ENCODE measurements at regions of chr10 and their contacts with region 1.

Region 1: GRCh38 chr10:87915989-87916388 is 52.6 kb downstream of the PTEN start:
- DNase-seq: no peak
- ATAC-seq: no peak
- H3K4me3 Mint-ChIP-seq: no peak overlapping the region
- H3K27ac Mint-ChIP-seq: peak overlapping the region; percentile 12
- H3K4me1 Mint-ChIP-seq: peaks cover 50% of the 10 kb centered on the region
- H3K27me3 Mint-ChIP-seq: no peaks in the 10 kb centered on the region
- CTCF ChIP-seq: no peak

Region 2: DNA sequence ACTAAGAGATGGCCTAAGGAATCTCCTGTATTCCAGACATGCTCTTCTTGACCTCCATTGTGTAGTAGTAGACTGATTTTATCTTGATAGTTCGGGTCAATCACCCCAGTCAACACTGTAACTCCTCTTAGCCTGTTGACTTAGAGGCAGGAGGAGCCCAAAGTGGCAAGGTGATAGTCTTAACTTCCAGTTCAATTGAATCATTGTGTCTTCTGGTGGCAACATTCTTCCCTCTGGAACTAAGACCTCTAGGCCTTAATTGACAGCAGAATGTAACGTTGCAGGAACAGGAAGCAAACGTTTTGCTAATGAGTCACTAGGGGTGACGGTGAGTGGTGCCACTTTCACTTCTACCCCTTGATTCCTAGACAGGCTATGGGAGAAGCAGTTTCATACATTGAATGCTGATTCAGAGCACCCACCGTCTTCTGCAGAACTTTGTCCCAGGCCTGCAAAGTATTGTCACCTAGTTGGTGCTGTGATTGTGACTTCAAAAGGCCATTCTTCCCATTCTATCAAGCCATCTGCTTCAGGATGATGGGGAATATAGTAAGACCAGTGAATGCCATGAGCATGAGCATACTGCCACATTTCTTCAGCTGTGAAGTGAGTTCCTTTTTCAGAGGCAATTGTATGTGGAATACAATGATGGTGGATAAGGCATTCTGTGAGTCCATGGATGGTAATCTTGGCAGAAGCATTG is 280.2 kb before region 1 on chr10:
- CTCF ChIA-PET with region 1: no interaction called
- POLR2A ChIA-PET with region 1: no interaction called
- intact Hi-C with region 1: no loop called
- DNase-seq: no peak
- ATAC-seq: peak; percentile 60
- H3K4me3 Mint-ChIP-seq: no peak overlapping the region
- H3K27ac Mint-ChIP-seq: no peak overlapping the region
- H3K4me1 Mint-ChIP-seq: peaks cover 7% of the 10 kb centered on the region
- H3K27me3 Mint-ChIP-seq: no peaks in the 10 kb centered on the region
- CTCF ChIP-seq: no peak

Region 3: GRCh38 chr10:87887548-87888289 is 28.3 kb before region 1 on chr10:
- CTCF ChIA-PET with region 1: no interaction called
- POLR2A ChIA-PET with region 1: no interaction called
- intact Hi-C with region 1: loop called (anchors 5 kb)
- DNase-seq: no peak
- ATAC-seq: peak; percentile 21
- H3K4me3 Mint-ChIP-seq: no peak overlapping the region
- H3K27ac Mint-ChIP-seq: no peak overlapping the region
- H3K4me1 Mint-ChIP-seq: peaks cover 40% of the 10 kb centered on the region
- H3K27me3 Mint-ChIP-seq: no peaks in the 10 kb centered on the region
- CTCF ChIP-seq: no peak

Region 4: GRCh38 chr10:87896216-87896615 is 19.8 kb before region 1 on chr10:
- CTCF ChIA-PET with region 1: no interaction called
- POLR2A ChIA-PET with region 1: no interaction called
- intact Hi-C with region 1: loop called (anchors 2 kb)
- DNase-seq: no peak
- ATAC-seq: no peak
- H3K4me3 Mint-ChIP-seq: no peak overlapping the region
- H3K27ac Mint-ChIP-seq: no peak overlapping the region
- H3K4me1 Mint-ChIP-seq: peaks cover 72% of the 10 kb centered on the region
- H3K27me3 Mint-ChIP-seq: no peaks in the 10 kb centered on the region
- CTCF ChIP-seq: no peak

Region 5: GRCh38 chr10:87927091-87927490 is 11.1 kb after region 1 on chr10:
- CTCF ChIA-PET with region 1: interaction called, 4 read pairs
- POLR2A ChIA-PET with region 1: no interaction called
- intact Hi-C with region 1: loop called (anchors 1 kb)
- DNase-seq: no peak
- ATAC-seq: no peak
- H3K4me3 Mint-ChIP-seq: no peak overlapping the region
- H3K27ac Mint-ChIP-seq: no peak overlapping the region
- H3K4me1 Mint-ChIP-seq: peaks cover 86% of the 10 kb centered on the region
- H3K27me3 Mint-ChIP-seq: no peaks in the 10 kb centered on the region
- CTCF ChIP-seq: no peak